ENCODE measurements at regions of chr11 and their contacts with region 1.

Region 1: GRCh38 chr11:10490398-10491241 is 35.6 kb downstream of the AMPD3 start:
- DNase-seq: peak; percentile 82
- ATAC-seq: peak; percentile 94

Region 2: DNA sequence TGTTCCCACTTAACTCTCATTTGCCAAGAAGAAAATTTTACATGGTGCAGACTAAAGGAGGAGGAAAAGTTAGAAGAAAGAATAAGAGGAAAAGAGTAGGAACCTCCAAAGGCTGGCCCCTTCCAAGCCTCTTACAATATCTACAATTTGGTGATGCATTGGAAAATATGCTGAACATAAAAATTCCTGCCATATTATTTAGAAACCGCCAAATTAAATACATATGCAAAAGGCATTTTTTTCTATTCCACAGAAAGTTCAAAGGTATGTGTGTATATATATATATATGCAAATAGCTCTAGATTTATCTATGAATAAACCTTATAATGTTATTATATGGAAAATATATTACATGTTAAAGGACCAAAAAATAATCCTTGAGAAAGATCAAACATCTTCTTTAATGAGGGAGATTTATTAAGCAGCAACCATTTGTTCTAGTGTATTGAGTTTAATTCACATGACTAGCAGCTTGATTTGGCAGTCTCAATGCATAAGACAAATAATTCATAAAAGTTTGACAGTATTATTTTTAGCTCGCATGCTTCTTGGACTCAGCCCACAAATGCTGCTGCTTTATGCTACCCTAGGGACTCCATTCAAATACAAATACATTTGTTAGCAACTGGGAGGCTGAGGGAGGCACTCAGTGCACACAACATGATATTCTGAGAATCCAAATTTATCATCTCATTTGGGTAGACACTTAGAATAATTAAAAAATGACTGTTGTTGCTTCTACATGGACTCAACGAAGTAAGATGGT is 381.5 kb before region 1 on chr11:
- intact Hi-C with region 1: no loop called
- DNase-seq: no peak
- ATAC-seq: peak; percentile 87

Region 3: GRCh38 chr11:11135820-11136465 is 645.3 kb after region 1 on chr11:
- intact Hi-C with region 1: loop called (anchors 5 kb)
- DNase-seq: no peak
- ATAC-seq: no peak

Measured in sciatic nerve (tissue), 2 donors.